Posterior vena cava (tissue), 2 donors: ENCODE measurements at regions of chr7 and their contacts with region 1.

Region 1: DNA sequence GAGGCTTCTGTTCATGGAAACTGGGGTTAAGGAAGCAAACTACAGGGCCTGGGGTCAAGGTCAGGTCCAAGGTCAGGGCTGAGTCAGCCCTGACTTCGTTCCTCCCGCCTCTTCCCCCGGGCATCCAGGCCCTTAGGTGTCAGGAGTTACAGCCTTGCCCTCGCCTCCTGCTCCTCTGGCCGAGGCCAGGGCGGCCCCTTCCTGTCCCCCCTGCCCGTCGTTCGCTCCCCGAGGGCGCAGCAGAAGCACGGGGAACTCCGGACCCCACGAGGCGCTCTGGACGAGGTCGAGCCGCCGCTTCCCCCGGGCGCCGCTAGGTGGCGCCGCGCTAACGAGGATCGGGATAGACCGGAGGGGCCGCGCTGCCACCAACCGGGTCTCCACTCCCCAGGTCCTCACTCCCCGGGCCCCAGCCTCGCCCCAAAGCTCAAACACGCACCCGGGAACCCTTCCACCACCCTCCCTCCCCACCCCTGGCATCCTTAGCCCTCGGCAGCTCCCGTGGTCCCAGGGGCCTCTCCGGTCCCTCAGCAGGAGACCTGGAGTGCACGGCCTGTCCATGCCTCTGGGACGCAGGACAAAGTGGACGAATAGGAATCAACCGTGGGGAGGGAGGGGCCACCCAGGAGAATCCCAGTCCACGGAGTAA is 59.2 kb upstream of the MYL10 start:
- DNase-seq: peak; percentile 95

Region 2: DNA sequence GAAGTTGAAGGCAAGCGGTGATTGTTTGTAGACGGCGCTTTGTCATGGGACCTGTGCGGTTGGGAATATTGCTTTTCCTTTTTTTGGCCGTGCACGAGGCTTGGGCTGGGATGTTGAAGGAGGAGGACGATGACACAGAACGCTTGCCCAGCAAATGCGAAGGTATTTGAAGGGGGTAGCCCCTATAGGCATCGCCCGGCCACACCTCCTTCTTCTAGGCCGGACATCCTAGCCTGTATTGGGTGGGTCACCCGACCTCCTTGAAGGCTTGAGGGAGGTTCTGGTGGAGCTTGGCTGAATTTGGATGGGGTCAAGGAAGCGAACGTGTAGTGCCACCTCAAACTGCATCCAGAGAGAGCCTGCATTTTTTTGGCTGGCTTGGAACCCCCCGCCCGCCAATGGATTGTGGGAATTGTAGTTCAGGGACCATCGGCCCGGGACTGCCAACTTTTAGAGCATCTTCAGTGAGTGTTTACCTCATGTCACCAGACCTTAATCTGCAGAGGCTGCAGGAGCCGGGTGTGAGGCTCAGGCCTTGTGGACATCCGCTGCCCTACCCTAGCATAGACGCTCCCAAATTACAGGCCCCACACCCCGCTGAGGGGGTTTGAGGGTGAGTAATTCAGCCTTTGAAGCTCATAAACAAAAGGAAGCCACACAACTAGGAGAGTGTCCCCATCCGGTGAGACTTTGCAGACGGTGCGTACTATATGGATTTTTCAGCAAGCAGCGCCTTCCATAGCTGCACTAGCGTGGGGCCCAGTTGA is 1568.4 kb before region 1 on chr7:
- intact Hi-C with region 1: loop called in 1 of 2 experiments (anchors 5 kb)
- DNase-seq: peak; percentile 87

Region 3: GRCh38 chr7:101669307-101669706 is 19.0 kb before region 1 on chr7:
- intact Hi-C with region 1: no loop called
- DNase-seq: no peak

Region 4: DNA sequence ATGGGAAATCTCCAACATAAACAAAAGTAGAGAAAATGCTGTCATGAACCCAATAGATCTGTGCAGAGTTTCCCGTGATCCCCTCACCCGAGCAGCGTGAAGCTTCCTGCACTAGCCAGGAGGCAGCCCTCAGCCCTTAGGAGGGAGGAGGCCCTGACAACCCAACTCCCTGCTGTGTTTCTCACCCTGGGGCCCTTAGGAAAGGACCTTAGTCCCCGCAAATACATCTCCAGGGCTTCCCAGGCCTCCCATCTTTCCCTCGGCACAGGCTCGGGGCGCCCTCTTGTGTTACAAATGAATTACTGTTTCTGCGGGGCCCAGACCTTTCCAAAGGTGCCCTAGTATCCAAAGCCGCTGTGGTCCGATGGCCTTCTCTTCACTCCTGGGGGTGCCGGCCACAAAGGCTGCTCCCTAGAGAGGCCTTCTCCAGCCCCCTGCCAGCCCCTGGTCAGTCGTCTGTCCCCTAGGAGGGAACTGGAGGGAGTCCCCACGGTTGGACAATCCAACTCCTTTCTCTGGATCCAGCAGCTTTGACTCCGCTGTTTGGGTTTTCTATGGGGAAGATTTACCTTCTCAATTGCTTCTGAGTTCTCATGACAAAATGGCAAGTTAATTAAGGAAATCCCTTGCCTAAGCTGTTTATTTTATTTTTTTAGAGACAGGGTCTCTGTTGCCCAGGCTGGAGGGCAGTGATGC is 548.4 kb after region 1 on chr7:
- intact Hi-C with region 1: loop called in 1 of 2 experiments (anchors 5 kb)
- DNase-seq: no peak